ENCODE measurements at regions of chr12 and their contacts with region 1.

Region 1: DNA sequence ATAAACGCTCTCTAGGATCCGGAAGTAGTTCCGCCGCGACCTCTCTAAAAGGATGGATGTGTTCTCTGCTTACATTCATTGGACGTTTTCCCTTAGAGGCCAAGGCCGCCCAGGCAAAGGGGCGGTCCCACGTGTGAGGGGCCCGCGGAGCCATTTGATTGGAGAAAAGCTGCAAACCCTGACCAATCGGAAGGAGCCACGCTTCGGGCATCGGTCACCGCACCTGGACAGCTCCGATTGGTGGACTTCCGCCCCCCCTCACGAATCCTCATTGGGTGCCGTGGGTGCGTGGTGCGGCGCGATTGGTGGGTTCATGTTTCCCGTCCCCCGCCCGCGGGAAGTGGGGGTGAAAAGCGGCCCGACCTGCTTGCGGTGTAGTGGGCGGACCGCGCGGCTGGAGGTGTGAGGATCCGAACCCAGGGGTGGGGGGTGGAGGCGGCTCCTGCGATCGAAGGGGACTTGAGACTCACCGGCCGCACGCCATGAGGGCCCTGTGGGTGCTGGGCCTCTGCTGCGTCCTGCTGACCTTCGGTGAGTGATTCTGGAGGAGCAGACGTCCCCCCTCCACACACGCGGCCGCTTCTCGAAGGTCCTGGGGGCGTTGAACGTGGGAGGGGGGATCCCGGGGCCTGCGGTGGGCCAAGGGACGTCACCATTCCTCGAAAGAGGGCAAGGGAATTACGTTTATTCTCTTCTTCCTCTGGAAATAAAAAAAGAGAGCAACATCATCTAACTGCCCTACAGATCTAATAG is at the start of gene HSP90B1:
- DNase-seq: peak; percentile 97
- ATAC-seq: peak; percentile 84
- H3K4me3 Mint-ChIP-seq: peak within 1 kb of the TSS; percentile 93
- H3K27ac Mint-ChIP-seq: peak within 1 kb of the TSS; percentile 100
- H3K4me1 Mint-ChIP-seq: peaks cover 47% of the 10 kb centered on the region
- H3K27me3 Mint-ChIP-seq: no peaks in the 10 kb centered on the region
- total RNA-seq, gene HSP90B1: 279 to 304 TPM

Region 2: GRCh38 chr12:103915306-103915705 is 14.9 kb before region 1 on chr12:
- POLR2A ChIA-PET with region 1: interaction called, 10 read pairs
- DNase-seq: no peak
- ATAC-seq: no peak
- H3K4me3 Mint-ChIP-seq: no peak overlapping the region
- H3K27ac Mint-ChIP-seq: no peak overlapping the region
- H3K4me1 Mint-ChIP-seq: no peaks in the 10 kb centered on the region
- H3K27me3 Mint-ChIP-seq: peaks cover 2% of the 10 kb centered on the region

Region 3: GRCh38 chr12:103956516-103957027 is 26.4 kb after region 1 on chr12:
- POLR2A ChIA-PET with region 1: interaction called, 41 read pairs
- DNase-seq: no peak
- ATAC-seq: no peak
- H3K4me3 Mint-ChIP-seq: peak overlapping the region; percentile 99
- H3K27ac Mint-ChIP-seq: peak overlapping the region; percentile 97
- H3K4me1 Mint-ChIP-seq: peaks cover 26% of the 10 kb centered on the region
- H3K27me3 Mint-ChIP-seq: no peaks in the 10 kb centered on the region

Region 4: GRCh38 chr12:103965590-103966504 is 35.6 kb after region 1 on chr12 and contains the start of gene TDG:
- POLR2A ChIA-PET with region 1: interaction called, 58 read pairs
- DNase-seq: peak; percentile 89
- ATAC-seq: peak; percentile 96
- H3K4me3 Mint-ChIP-seq: peak within 1 kb of the TSS; percentile 95
- H3K27ac Mint-ChIP-seq: peak within 1 kb of the TSS; percentile 94
- H3K4me1 Mint-ChIP-seq: peaks cover 42% of the 10 kb centered on the region
- H3K27me3 Mint-ChIP-seq: no peaks in the 10 kb centered on the region
- total RNA-seq, gene TDG: 32.5 to 37.6 TPM

Region 5: DNA sequence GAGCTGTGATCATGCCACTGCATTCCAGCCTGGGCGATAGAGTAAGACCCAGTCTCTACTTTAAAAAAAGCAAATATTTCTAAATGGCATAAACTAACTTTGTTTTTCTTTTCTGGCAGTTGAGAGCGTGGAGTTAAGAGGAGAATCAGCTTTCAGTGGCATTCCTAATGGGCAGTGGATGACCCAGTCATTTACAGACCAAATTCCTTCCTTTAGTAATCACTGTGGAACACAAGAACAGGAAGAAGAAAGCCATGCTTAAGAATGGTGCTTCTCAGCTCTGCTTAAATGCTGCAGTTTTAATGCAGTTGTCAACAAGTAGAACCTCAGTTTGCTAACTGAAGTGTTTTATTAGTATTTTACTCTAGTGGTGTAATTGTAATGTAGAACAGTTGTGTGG is 56.6 kb after region 1 on chr12:
- POLR2A ChIA-PET with region 1: no interaction called
- DNase-seq: no peak
- ATAC-seq: no peak
- H3K4me3 Mint-ChIP-seq: no peak overlapping the region
- H3K27ac Mint-ChIP-seq: no peak overlapping the region
- H3K4me1 Mint-ChIP-seq: no peaks in the 10 kb centered on the region
- H3K27me3 Mint-ChIP-seq: no peaks in the 10 kb centered on the region

Region 6: GRCh38 chr12:104137913-104138796 is 207.9 kb after region 1 on chr12 and contains the start of gene NFYB:
- POLR2A ChIA-PET with region 1: interaction called, 21 read pairs
- DNase-seq: peak; percentile 94
- ATAC-seq: peak; percentile 98
- H3K4me3 Mint-ChIP-seq: peak within 1 kb of the TSS; percentile 89
- H3K27ac Mint-ChIP-seq: peak within 1 kb of the TSS; percentile 88
- H3K4me1 Mint-ChIP-seq: peaks cover 14% of the 10 kb centered on the region
- H3K27me3 Mint-ChIP-seq: peaks cover 18% of the 10 kb centered on the region
- total RNA-seq, gene NFYB: 24.8 to 28.5 TPM